T-cell (primary cell): ENCODE measurements at regions of chr11 and their contacts with region 1.

Region 1: DNA sequence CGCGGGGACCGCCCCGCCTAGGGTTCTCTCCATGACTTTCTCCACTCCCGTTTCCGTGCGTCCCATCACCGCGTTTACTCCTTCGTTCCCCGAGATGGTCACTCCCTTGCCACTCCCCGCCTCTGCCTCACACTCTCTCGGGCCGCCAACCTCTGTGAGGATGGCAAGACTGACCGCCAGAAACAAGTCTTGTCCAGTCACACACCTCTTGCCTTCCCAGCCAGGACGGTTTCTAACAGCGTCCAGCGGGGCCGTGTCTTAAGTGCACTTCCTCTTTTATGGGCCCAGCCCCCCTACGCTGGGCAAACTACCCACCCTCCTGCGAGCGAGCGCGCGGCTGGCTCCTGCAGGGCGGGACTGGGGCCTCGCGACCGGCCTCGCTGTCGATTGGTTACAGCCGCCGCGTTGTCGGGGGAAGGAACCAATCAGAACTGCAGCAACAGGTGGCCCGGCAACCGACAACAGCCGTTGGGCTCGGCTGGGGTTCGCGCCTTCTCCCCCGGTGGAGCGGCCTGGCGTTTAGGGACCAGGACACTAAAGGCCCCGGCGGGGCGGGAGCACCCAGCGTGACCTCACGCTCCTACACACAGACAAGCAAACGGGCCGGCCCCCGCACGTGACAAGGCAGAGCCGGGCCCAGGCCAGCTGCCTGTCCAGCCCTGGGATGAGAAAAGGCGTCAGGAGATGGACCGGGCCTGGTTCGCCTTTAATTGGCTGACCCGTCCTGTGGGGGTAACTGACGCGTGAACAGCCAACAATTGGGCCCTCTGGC is 512 bp upstream of the UCP2 start:
- DNase-seq: peak; percentile 82 to 95 (median 91)
- ATAC-seq: peak; percentile 79 to 84 (median 81)
- H3K4me3 ChIP-seq: peak overlapping the region; percentile 61 to 85
- H3K4me3 Mint-ChIP-seq: peak overlapping the region; percentile 89 to 98 (median 97)
- H3K27ac ChIP-seq: peak overlapping the region; percentile 94
- H3K27ac Mint-ChIP-seq: peak overlapping the region; percentile 98 to 99
- H3K4me1 ChIP-seq: peaks cover 30 to 47% of the 10 kb centered on the region in 2 experiments
- H3K4me1 Mint-ChIP-seq: peaks cover 40 to 52% (median 40%) of the 10 kb centered on the region in 3 donors
- H3K27me3 ChIP-seq: no peaks in the 10 kb centered on the region
- H3K27me3 Mint-ChIP-seq: no peaks in the 10 kb centered on the region

Region 2: GRCh38 chr11:73633999-73634398 is 349.2 kb before region 1 on chr11:
- CTCF ChIA-PET with region 1: no interaction called
- POLR2A ChIA-PET with region 1: no interaction called
- DNase-seq: peak in 1 of 35 experiments; percentile 27
- ATAC-seq: peak; percentile 57 to 86 (median 82)
- H3K4me3 ChIP-seq: no peak overlapping the region
- H3K4me3 Mint-ChIP-seq: no peak overlapping the region
- H3K27ac ChIP-seq: no peak overlapping the region
- H3K27ac Mint-ChIP-seq: peak overlapping the region; percentile 57 to 82
- H3K4me1 ChIP-seq: peaks cover 7 to 14% of the 10 kb centered on the region in 2 experiments
- H3K4me1 Mint-ChIP-seq: peaks cover 6 to 16% (median 8%) of the 10 kb centered on the region in 3 donors
- H3K27me3 ChIP-seq: no peaks in the 10 kb centered on the region
- H3K27me3 Mint-ChIP-seq: no peaks in the 10 kb centered on the region

Region 3: DNA sequence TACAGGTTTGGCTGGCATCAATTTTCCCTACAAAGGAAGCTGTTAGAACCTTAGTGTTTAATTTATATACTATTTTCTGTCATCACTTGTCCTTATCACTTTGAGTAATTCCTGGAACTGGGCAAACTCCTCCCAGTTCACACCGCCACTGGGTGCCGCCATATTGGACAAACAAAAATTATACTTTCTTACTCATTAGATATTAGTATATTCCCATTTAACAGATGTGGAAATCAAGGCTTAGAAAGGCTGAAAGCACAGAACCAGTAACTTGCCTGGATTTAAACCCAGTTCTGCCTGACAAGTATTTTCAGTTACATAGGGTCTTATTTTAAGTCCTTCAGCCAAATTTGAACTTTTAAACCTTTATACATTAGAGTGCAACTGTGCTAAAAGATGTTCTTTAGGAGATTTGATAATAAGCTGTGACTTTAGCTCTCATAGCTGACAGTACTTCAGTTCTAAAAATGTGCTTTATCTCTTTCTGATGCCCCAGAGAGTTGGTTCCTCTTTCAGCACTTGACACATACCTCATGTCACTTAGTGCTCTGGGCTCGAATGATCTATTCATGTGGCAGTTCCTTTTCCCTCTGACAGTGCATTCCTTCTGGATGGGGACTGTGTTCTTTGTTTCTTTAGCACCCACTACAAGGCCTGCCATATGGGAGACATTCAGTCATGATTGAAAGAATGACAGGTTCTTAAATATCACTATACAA is 131.9 kb before region 1 on chr11:
- CTCF ChIA-PET with region 1: no interaction called
- POLR2A ChIA-PET with region 1: no interaction called
- DNase-seq: no peak
- ATAC-seq: no peak
- H3K4me3 ChIP-seq: no peak overlapping the region
- H3K4me3 Mint-ChIP-seq: no peak overlapping the region
- H3K27ac ChIP-seq: no peak overlapping the region
- H3K27ac Mint-ChIP-seq: no peak overlapping the region
- H3K4me1 ChIP-seq: no peaks in the 10 kb centered on the region
- H3K4me1 Mint-ChIP-seq: no peaks in the 10 kb centered on the region
- H3K27me3 ChIP-seq: no peaks in the 10 kb centered on the region
- H3K27me3 Mint-ChIP-seq: no peaks in the 10 kb centered on the region

Region 4: DNA sequence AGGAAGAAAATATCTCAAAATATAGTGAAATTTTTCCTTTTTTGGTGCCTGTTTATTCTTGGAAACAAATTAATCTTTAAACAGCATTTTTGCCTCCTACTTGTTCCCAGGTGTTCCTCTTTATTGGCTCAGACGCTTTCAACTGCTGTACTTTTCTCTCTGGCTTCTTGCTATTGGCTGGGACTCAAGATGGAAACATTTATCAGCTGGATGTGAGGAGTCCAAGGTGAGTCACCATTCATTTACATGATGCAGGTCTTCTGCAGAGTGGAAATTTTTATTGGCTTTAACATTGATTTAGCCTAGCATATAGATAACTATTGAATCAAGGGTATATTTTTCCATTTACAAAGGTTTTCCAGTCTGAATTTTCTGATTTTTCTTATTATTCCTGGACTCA is 66.7 kb before region 1 on chr11:
- CTCF ChIA-PET with region 1: no interaction called
- POLR2A ChIA-PET with region 1: no interaction called
- DNase-seq: no peak
- ATAC-seq: no peak
- H3K4me3 ChIP-seq: no peak overlapping the region
- H3K4me3 Mint-ChIP-seq: no peak overlapping the region
- H3K27ac ChIP-seq: no peak overlapping the region
- H3K27ac Mint-ChIP-seq: no peak overlapping the region
- H3K4me1 ChIP-seq: no peaks in the 10 kb centered on the region
- H3K4me1 Mint-ChIP-seq: no peaks in the 10 kb centered on the region
- H3K27me3 ChIP-seq: no peaks in the 10 kb centered on the region
- H3K27me3 Mint-ChIP-seq: no peaks in the 10 kb centered on the region

Region 5: DNA sequence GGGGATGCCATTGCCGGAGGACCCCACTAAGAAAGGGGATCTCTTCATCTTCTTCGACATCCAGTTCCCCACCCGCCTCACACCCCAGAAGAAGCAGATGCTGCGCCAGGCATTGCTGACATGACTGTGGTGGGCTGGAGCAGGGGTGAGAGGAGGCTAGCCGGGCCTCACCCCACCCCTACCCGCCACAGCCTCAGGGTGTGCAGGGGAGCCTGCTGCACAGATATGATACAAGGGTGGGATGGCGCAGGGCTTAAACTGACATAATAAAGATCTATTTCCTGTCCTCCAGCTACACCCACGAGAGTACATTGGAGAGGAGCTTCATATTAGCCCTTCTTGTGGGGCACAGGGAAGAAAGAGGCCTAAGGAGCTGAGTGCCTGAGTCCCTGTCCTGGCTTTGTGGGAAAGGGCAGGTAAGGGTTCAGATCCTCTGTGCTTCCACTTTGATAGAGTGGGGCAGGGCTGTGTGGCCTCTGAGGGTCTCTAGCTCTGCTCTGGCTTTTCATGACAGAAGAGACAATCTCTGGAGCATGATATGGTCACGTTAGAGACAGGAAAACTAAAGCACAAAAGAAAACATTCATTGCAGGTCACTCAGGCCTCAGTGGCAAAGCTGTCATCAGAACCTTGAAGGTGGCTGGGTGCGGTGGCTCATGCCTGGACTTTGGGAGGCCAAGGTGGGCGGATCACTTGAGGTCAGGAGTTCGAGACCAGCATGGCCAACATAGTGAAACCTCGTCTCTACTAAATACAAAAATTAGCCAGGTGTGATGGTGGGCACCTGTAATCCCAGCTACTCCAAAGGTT is 13.0 kb before region 1 on chr11:
- CTCF ChIA-PET with region 1: interaction called, 3 to 15 read pairs
- POLR2A ChIA-PET with region 1: interaction called, 15 to 33 read pairs
- DNase-seq: peak in 34 of 35 experiments; percentile 28 to 72 (median 54)
- ATAC-seq: peak; percentile 34 to 40 (median 38)
- H3K4me3 ChIP-seq: no peak overlapping the region
- H3K4me3 Mint-ChIP-seq: peak overlapping the region in 1 of 3 donors; percentile 89
- H3K27ac ChIP-seq: peak overlapping the region; percentile 76
- H3K27ac Mint-ChIP-seq: peak overlapping the region; percentile 98 to 100
- H3K4me1 ChIP-seq: peaks cover 57 to 100% of the 10 kb centered on the region in 2 experiments
- H3K4me1 Mint-ChIP-seq: peaks cover 77 to 87% (median 84%) of the 10 kb centered on the region in 3 donors
- H3K27me3 ChIP-seq: no peaks in the 10 kb centered on the region
- H3K27me3 Mint-ChIP-seq: no peaks in the 10 kb centered on the region

Region 6: GRCh38 chr11:73995247-73995646 is 12.1 kb after region 1 on chr11:
- CTCF ChIA-PET with region 1: interaction called, 3 to 23 read pairs
- POLR2A ChIA-PET with region 1: interaction called, 44 to 199 read pairs
- DNase-seq: peak in 5 of 35 experiments; percentile 31 to 87 (median 54)
- ATAC-seq: peak; percentile 73 to 81 (median 75)
- H3K4me3 ChIP-seq: peak overlapping the region; percentile 18 to 34
- H3K4me3 Mint-ChIP-seq: peak overlapping the region; percentile 70 to 78 (median 71)
- H3K27ac ChIP-seq: peak overlapping the region; percentile 98
- H3K27ac Mint-ChIP-seq: peak overlapping the region; percentile 96 to 99
- H3K4me1 ChIP-seq: peaks cover 59 to 62% of the 10 kb centered on the region in 2 experiments
- H3K4me1 Mint-ChIP-seq: peaks cover 72 to 81% (median 75%) of the 10 kb centered on the region in 3 donors
- H3K27me3 ChIP-seq: no peaks in the 10 kb centered on the region
- H3K27me3 Mint-ChIP-seq: no peaks in the 10 kb centered on the region

Region 7: GRCh38 chr11:74004759-74005615 is 21.8 kb after region 1 on chr11:
- CTCF ChIA-PET with region 1: interaction called, 3 to 13 read pairs
- POLR2A ChIA-PET with region 1: interaction called, 10 to 26 read pairs
- DNase-seq: peak; percentile 70 to 94 (median 88)
- ATAC-seq: peak; percentile 99 to 100 (median 100)
- H3K4me3 ChIP-seq: peak overlapping the region; percentile 26 to 35
- H3K4me3 Mint-ChIP-seq: peak overlapping the region; percentile 50 to 82 (median 74)
- H3K27ac ChIP-seq: peak overlapping the region; percentile 91
- H3K27ac Mint-ChIP-seq: peak overlapping the region; percentile 91 to 95
- H3K4me1 ChIP-seq: peaks cover 52 to 87% of the 10 kb centered on the region in 2 experiments
- H3K4me1 Mint-ChIP-seq: peaks cover 65 to 87% (median 85%) of the 10 kb centered on the region in 3 donors
- H3K27me3 ChIP-seq: no peaks in the 10 kb centered on the region
- H3K27me3 Mint-ChIP-seq: no peaks in the 10 kb centered on the region

Region 8: DNA sequence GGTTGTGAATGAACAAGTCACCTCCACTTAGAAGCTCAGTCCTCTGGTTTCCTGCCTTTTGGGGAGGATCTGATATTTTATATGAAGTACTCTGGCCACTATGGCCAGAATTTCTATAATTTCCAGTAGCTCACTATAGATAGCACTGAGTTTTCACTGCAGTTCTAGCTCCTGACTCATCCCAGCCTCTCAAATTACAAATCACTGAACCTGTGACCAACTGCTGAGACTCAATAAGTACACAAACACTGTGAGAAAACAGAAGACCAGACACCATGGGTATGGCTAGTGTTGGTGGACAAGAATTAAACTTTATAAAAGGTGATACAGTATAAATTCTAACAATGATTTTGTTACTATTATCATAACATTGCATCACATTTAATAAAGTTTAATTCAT is 72.8 kb after region 1 on chr11:
- CTCF ChIA-PET with region 1: no interaction called
- POLR2A ChIA-PET with region 1: interaction called in 1 of 2 experiments, 11 read pairs
- DNase-seq: no peak
- ATAC-seq: no peak
- H3K4me3 ChIP-seq: no peak overlapping the region
- H3K4me3 Mint-ChIP-seq: no peak overlapping the region
- H3K27ac ChIP-seq: no peak overlapping the region
- H3K27ac Mint-ChIP-seq: no peak overlapping the region
- H3K4me1 ChIP-seq: no peaks in the 10 kb centered on the region
- H3K4me1 Mint-ChIP-seq: peaks cover 5 to 10% (median 5%) of the 10 kb centered on the region in 3 donors
- H3K27me3 ChIP-seq: no peaks in the 10 kb centered on the region
- H3K27me3 Mint-ChIP-seq: no peaks in the 10 kb centered on the region